ENCODE measurements at regions of chr6 and their contacts with region 1.

Region 1: DNA sequence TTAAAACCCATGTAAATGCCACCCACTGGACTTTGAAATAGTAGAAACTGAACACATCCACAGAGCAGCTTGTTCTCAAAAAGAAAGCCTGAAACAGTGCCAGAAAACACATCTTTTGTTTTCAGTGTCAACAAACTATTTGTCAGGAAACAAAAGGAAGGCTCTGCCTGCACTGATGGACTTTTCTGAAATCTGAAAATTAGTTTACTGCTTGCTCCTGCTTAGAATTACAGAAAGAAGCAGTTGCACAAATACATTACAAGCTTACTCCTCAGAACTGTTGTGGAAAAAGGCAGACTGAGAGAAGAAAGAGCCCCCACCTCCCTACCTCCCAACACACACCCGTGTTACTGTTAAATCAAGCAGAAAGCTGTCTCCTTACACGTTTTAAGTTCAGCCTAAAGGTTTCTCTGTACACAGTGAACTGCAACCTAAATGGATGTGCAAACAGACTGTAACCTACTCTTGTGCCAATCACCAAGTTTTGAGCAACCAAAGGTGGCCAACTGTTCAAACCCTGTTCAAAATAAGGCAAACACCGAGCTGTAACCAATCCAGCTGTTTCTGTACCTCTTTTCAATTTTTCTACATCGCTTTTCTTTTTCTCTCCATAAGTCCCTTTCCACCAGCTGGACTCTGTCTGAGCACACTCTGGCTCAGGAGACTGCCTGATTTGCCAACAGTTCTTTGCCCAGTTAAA is 43.7 kb downstream of the FRK start:
- DNase-seq: no peak
- ATAC-seq: no peak
- H3K4me3 Mint-ChIP-seq: peak overlapping the region; percentile 52
- H3K27ac Mint-ChIP-seq: peak overlapping the region; percentile 71
- H3K4me1 Mint-ChIP-seq: peaks cover 59% of the 10 kb centered on the region
- H3K27me3 Mint-ChIP-seq: no peaks in the 10 kb centered on the region
- CTCF ChIP-seq: no peak

Region 2: GRCh38 chr6:114284281-114284680 is 1732.7 kb before region 1 on chr6:
- CTCF ChIA-PET with region 1: no interaction called
- POLR2A ChIA-PET with region 1: no interaction called
- intact Hi-C with region 1: no loop called
- DNase-seq: no peak
- ATAC-seq: no peak
- H3K4me3 Mint-ChIP-seq: no peak overlapping the region
- H3K27ac Mint-ChIP-seq: no peak overlapping the region
- H3K4me1 Mint-ChIP-seq: no peaks in the 10 kb centered on the region
- H3K27me3 Mint-ChIP-seq: peaks cover 4% of the 10 kb centered on the region
- CTCF ChIP-seq: no peak

Region 3: GRCh38 chr6:116047173-116047933 is 30.4 kb after region 1 on chr6:
- CTCF ChIA-PET with region 1: interaction called, 3 read pairs
- POLR2A ChIA-PET with region 1: interaction called, 3 read pairs
- intact Hi-C with region 1: loop called (anchors 2 kb)
- DNase-seq: no peak
- ATAC-seq: peak; percentile 52
- H3K4me3 Mint-ChIP-seq: no peak overlapping the region
- H3K27ac Mint-ChIP-seq: no peak overlapping the region
- H3K4me1 Mint-ChIP-seq: peaks cover 13% of the 10 kb centered on the region
- H3K27me3 Mint-ChIP-seq: peaks cover 2% of the 10 kb centered on the region
- CTCF ChIP-seq: no peak

Region 4: DNA sequence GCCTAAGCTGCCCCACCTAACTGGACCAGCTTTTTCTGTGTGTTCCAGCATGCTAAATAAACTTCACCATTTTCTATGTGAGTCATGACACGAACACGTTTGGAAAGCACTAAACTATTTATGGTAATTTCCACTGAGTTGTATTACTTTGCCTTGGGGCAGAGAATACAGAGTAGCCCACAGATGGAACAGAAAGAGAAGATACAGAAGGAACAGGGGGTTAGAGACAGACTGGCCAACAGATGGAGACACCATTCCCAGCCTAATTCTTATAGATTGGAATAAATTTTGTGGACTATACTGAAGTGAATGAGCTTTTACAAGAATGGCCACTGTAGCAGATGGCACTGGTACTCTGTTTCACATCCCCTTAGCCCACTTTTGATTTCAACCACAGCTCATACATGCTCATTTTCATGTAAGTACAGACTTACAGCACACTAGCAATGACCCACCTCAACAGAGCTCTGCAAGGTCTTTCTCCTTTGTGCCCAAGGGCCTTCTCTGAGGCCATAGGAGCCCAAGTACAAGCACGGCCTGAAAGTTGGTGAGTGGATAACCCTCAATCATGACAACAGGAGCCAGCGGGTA is 70.5 kb after region 1 on chr6:
- CTCF ChIA-PET with region 1: no interaction called
- POLR2A ChIA-PET with region 1: interaction called, 9 read pairs
- intact Hi-C with region 1: loop called (anchors 1 kb)
- DNase-seq: peak; percentile 18
- ATAC-seq: peak; percentile 95
- H3K4me3 Mint-ChIP-seq: peak overlapping the region; percentile 62
- H3K27ac Mint-ChIP-seq: peak overlapping the region; percentile 87
- H3K4me1 Mint-ChIP-seq: peaks cover 34% of the 10 kb centered on the region
- H3K27me3 Mint-ChIP-seq: no peaks in the 10 kb centered on the region
- CTCF ChIP-seq: no peak

Region 5: GRCh38 chr6:116165596-116165995 is 148.6 kb after region 1 on chr6:
- CTCF ChIA-PET with region 1: no interaction called
- POLR2A ChIA-PET with region 1: no interaction called
- intact Hi-C with region 1: loop called (anchors 1 kb)
- DNase-seq: peak; percentile 62
- ATAC-seq: peak; percentile 100
- H3K4me3 Mint-ChIP-seq: peak overlapping the region; percentile 42
- H3K27ac Mint-ChIP-seq: no peak overlapping the region
- H3K4me1 Mint-ChIP-seq: peaks cover 39% of the 10 kb centered on the region
- H3K27me3 Mint-ChIP-seq: no peaks in the 10 kb centered on the region
- CTCF ChIP-seq: no peak

Region 6: DNA sequence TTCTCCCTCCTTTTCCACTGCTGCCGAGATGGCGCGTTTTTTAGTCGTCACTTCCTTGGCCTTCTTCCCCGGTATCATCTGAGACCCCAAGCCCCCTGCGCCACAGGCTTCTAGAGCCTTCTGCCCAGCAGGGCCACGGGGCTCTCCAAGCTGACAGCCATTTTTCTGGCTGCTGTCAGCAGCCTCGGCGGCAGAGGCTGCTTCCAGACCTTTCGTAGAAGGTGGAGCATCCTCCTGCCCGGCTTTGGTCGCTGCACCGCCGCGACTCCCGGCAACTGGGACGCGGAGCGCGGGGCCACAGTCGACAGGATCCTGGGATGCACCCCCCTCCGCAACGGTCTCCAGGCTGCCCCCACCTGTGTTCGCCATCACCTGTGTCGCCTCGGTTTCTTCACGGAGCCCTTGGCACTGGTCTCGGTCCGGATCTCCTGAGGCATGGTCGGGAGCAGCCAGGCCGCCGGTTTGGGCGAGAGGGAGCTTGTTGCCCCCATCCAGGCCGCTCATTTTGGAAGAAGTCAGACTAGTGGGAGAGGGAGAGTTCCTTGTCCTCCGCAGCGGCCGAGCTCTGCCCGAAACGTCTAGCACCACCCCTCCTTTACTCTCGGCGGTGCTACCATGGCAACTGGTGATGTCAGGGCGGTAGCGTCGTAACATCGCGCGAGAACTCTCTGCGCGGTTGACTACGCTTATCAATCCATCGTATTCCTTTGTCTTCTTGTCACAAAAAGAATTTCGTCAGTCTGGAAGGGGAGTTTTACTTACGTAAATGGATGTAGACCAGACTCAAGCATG is 236.7 kb after region 1 on chr6 and contains the start of gene TSPYL4:
- CTCF ChIA-PET with region 1: no interaction called
- POLR2A ChIA-PET with region 1: no interaction called
- intact Hi-C with region 1: loop called (anchors 5 kb)
- DNase-seq: peak; percentile 80
- ATAC-seq: peak; percentile 98
- H3K4me3 Mint-ChIP-seq: no peak within 1 kb of the TSS
- H3K27ac Mint-ChIP-seq: no peak within 1 kb of the TSS
- H3K4me1 Mint-ChIP-seq: peaks cover 1% of the 10 kb centered on the region
- H3K27me3 Mint-ChIP-seq: no peaks in the 10 kb centered on the region
- CTCF ChIP-seq: no peak
- total RNA-seq, gene TSPYL4: 16.0 and 16.7 TPM in 2 replicates